ENCODE measurements at regions of chr17 and their contacts with region 1.

Region 1: DNA sequence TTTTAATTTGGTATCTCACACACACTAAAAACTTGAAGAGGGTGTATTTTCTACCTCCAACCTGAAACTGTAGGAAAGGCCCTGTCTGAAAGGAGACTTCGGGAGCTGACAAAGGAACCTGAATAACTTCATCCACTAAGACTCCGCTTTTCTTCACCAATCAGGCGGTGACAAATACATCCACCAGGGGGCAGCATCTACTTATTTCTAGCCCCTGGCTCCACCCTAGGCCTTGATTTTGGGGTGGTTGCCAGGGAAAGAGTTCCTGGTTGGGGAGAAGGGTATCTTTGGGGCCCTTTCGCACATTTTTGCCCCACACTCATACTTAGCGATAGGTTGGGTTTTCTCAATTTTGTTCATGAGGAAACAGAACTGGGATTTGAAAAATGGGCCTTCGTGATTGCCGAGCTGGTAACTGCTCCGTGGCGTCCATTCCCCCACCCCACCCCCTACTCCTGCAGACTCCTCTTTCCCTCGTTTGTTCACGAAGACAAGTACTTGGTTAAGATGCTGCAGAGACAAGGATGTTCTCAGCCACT is 4.8 kb upstream of the ARL4D start:
- DNase-seq: peak; percentile 82
- H3K4me3 Mint-ChIP-seq: no peak overlapping the region
- H3K27ac Mint-ChIP-seq: peak overlapping the region; percentile 44
- H3K4me1 Mint-ChIP-seq: peaks cover 43% of the 10 kb centered on the region
- H3K27me3 Mint-ChIP-seq: peaks cover 2% of the 10 kb centered on the region

Region 2: GRCh38 chr17:43428524-43428923 is 34.5 kb after region 1 on chr17:
- intact Hi-C with region 1: loop called (anchors 1 kb)
- DNase-seq: no peak
- H3K4me3 Mint-ChIP-seq: no peak overlapping the region
- H3K27ac Mint-ChIP-seq: no peak overlapping the region
- H3K4me1 Mint-ChIP-seq: no peaks in the 10 kb centered on the region
- H3K27me3 Mint-ChIP-seq: peaks cover 31% of the 10 kb centered on the region

Region 3: GRCh38 chr17:43483674-43484372 is 89.8 kb after region 1 on chr17 and contains the start of gene DHX8:
- intact Hi-C with region 1: loop called (anchors 2 kb)
- DNase-seq: peak; percentile 98
- H3K4me3 Mint-ChIP-seq: peak within 1 kb of the TSS; percentile 99
- H3K27ac Mint-ChIP-seq: peak within 1 kb of the TSS; percentile 95
- H3K4me1 Mint-ChIP-seq: peaks cover 22% of the 10 kb centered on the region
- H3K27me3 Mint-ChIP-seq: peaks cover 2% of the 10 kb centered on the region
- total RNA-seq, gene DHX8: 57.0 and 59.8 TPM in 2 replicates

Measured in activated T-helper 1 cell treated with anti-CD3 and anti-CD28 coated beads, Interleukin-12 subunit alpha, Interleukin-12 subunit beta, Interleukin-2, Interleukin-4 antibody, amounts not matched to agents 30 ng/mL and 10 ng/mL and 1 ng/mL, durations not matched to agents 14 hours and 24 hours and 36 hours (primary cell).